Dendritic cell treated with granulocyte-macrophage colony-stimulating factor and Interleukin-4, amounts not matched to agents 40 ng/mL and 50 ng/mL, for 4 days (primary cell): ENCODE measurements at regions of chr7 and their contacts with region 1.

Region 1: DNA sequence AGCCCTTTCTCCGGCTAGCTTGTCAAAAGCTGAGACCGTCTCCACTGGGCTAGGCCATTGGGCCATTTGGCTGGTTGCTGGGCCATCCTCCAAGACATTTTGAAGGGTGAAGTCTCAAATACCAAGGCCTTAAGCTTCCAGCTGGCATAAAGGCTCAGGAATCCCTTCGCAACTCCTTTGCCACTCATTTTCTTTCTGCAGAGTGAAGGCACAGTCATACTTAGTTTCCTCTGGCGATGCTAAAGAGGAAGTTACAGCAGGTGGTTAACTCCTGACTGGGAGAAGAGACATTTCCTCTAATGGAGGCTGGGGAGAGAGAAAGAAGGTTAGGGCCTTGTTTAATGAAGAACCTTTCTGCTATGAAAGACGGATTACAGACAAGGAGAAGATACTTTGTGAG is 4.8 kb upstream of the REPIN1 start:
- H3K4me3 Mint-ChIP-seq: no peak overlapping the region
- H3K27ac Mint-ChIP-seq: peak overlapping the region; percentile 85
- H3K4me1 Mint-ChIP-seq: peaks cover 52% of the 10 kb centered on the region
- H3K27me3 Mint-ChIP-seq: peaks cover 8% of the 10 kb centered on the region

Region 2: DNA sequence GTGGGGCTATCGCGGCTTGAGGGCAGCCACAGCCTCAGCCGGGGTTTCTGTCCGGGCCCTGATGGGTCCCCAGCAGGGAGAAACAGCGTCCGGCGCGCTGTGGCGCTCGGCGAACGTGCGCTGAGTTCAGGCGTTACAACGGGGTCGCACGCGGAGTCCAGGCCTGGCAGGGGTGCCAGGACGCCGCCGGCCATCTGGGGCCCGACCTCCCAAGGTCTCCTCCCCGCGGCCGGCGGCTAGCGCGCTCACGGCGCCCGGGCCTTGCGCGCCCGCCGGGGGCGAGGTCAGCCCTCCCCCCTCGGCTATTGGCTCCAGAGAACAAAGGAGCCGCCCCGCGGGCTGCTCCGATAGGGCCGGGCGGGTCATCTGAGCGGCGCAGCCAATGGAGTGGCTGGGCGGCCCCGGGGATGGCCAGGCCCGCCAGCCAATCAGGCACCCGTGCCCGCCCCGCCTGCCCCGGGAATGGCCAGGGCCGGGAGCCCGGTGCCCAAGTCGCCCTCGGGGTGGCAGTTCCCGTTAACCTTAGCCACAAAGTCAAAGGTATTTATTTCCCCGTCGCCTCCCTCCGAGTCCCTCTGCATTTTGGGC is 15.1 kb after region 1 on chr7 and contains the start of gene ZNF775:
- intact Hi-C with region 1: loop called (anchors 1 kb)
- H3K4me3 Mint-ChIP-seq: peak within 1 kb of the TSS; percentile 85
- H3K27ac Mint-ChIP-seq: peak within 1 kb of the TSS; percentile 88
- H3K4me1 Mint-ChIP-seq: peaks cover 79% of the 10 kb centered on the region
- H3K27me3 Mint-ChIP-seq: no peaks in the 10 kb centered on the region

Region 3: DNA sequence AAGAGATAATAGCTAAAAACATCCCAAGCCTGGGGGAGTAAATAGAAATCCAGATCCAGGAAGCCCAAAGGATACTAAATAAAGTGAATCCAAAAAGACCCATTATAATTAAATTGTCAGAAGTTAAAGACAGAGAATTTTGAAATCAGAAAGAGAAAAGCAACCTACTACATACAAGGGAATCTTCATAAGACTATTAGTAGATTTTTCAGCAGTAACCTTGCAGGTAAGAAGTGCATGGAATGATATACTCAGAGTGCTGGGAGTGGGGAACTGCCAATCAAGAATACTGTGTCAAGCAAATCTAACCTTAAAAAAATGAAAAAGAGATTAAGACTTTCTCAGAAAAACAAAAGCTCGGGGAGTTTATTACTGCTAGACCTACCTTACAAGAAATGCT is 339.3 kb after region 1 on chr7:
- intact Hi-C with region 1: no loop called
- H3K4me3 Mint-ChIP-seq: no peak overlapping the region
- H3K27ac Mint-ChIP-seq: no peak overlapping the region
- H3K4me1 Mint-ChIP-seq: peaks cover 6% of the 10 kb centered on the region
- H3K27me3 Mint-ChIP-seq: peaks cover 2% of the 10 kb centered on the region